ENCODE measurements at regions of chr12 and their contacts with region 1.

Region 1: DNA sequence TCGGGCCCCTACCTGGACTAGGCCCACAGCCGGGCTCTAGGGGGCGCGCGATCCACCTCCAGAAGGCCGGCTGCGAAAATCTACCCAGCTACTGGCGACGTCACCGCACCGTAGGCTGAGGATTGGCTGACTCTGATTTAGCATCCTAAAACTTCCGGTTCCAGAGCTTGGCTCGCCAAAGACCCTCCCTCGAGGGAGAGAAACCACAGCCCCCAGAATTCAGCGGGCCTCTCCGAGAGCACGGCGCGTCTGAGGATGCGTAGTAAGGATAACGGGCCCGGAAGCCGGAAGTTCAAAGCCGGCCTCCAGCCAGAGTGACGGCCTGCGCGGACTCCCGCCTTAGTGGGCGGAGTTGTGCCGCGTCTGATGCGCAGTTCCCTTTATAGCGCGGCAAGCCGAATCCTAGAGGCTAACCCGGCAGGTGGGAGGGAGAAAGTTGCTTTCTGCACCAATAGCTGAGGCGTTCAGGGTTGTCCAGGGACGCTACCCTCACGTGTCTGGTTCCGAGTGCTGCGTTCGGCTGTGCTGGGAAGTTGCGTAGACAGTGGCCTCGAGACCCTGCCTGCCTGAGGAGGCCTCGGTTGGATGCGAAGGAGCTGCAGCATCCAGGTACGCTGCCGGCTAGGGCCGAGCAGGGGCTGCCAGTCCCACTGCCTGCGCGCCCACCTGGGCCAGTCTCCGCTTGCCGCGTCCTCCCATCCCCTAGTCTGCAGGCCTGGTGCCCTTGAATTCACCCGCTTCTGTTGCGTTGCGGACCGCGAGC is at the start of gene COX14:
- DNase-seq: peak; percentile 99
- H3K4me3 Mint-ChIP-seq: peak within 1 kb of the TSS; percentile 89
- H3K27ac Mint-ChIP-seq: peak within 1 kb of the TSS; percentile 97
- H3K4me1 Mint-ChIP-seq: peaks cover 34% of the 10 kb centered on the region
- H3K27me3 Mint-ChIP-seq: no peaks in the 10 kb centered on the region
- total RNA-seq, gene COX14: 31.6 to 47.9 TPM

Region 2: DNA sequence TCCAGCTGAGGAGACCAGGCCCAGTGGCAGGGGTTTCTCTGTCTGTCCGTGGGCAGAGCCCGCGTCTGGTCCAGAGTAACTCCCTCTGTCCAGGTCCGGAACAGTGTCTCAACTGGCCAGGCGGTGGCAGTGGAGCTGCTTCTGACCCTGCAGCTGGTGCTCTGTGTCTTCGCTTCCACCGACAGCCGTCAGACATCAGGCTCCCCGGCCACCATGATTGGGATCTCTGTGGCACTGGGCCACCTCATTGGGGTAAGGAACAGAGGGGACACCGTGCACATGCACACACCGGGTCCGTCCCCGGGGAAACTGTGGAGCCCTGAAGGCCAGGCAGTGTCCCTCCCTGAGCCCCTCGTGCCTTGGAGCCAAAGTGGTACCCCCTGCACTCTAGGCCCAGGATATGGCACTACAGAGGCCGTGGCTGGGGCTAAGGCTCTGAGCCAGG is 137.6 kb before region 1 on chr12:
- CTCF ChIA-PET with region 1: no interaction called
- POLR2A ChIA-PET with region 1: no interaction called
- DNase-seq: no peak
- H3K4me3 Mint-ChIP-seq: no peak overlapping the region
- H3K27ac Mint-ChIP-seq: no peak overlapping the region
- H3K4me1 Mint-ChIP-seq: no peaks in the 10 kb centered on the region
- H3K27me3 Mint-ChIP-seq: no peaks in the 10 kb centered on the region

Region 3: GRCh38 chr12:50055831-50056638 is 55.8 kb before region 1 on chr12:
- CTCF ChIA-PET with region 1: interaction called, 11 read pairs
- POLR2A ChIA-PET with region 1: no interaction called
- DNase-seq: peak; percentile 63
- H3K4me3 Mint-ChIP-seq: peak overlapping the region; percentile 28
- H3K27ac Mint-ChIP-seq: no peak overlapping the region
- H3K4me1 Mint-ChIP-seq: peaks cover 44% of the 10 kb centered on the region
- H3K27me3 Mint-ChIP-seq: peaks cover 44% of the 10 kb centered on the region

Region 4: DNA sequence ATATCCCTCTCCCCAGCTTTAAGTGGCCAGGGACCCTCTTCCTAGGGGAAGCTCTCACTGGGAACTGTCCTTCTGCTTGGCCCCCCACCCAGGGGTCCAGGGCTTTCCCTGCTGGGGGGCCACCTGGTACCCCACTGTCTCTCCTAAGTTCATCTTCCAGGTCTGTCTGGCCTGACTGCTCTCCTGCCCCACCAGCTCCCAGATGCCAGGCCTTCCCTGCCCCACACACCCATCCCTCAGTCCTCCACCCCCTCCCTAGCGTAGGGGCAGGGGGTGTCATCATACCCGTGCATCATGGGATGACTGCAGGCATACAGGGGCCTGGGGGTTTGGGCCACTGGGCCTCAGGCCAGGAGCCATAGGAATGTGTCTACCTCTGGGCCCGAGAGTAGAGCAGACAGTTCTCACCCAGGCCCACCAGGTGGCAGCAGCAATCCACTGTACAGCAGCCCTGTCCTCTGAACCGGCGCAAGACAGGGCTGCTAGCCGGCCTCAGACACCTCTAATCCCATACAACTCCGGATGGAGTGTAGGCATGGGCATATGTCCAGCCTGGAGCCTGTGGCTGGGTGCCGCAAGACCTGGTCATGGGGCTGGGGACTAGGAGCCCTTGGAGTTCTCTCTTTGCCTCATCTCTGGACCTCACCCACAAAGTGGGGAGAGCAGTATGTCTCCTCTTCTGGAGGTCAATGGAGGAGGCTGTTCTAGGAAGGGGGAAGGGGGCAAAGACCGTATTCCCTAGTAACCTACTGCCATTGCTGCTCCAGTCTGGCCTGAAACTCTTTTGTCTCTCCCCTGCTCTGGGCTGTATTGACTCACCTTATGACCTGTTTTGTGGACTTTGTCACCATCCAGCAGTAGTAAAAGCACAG is 36.7 kb before region 1 on chr12:
- CTCF ChIA-PET with region 1: interaction called, 11 read pairs
- POLR2A ChIA-PET with region 1: no interaction called
- DNase-seq: peak; percentile 83
- H3K4me3 Mint-ChIP-seq: no peak overlapping the region
- H3K27ac Mint-ChIP-seq: peak overlapping the region; percentile 52
- H3K4me1 Mint-ChIP-seq: peaks cover 7% of the 10 kb centered on the region
- H3K27me3 Mint-ChIP-seq: no peaks in the 10 kb centered on the region

Region 5: DNA sequence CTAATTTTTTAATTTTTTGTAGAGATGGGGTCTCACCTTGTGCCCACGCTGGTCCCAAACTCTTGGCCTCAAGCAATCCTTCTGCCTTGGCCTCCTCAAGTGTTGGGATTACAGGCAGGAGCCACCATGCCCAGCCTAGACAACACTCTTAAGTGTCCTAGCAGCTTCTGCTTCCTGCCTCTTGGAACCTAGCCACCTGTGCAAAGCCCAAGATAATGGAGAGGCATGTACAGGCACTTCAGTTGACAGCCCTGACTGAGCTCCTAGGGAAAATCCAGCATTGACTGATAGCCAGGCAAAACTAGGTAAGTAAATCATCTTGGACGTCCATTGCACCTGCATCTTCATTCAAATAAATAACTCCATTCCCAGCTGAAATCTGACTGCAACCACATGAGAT is 15.7 kb after region 1 on chr12:
- CTCF ChIA-PET with region 1: interaction called, 63 read pairs
- POLR2A ChIA-PET with region 1: interaction called, 9 read pairs
- DNase-seq: no peak
- H3K4me3 Mint-ChIP-seq: no peak overlapping the region
- H3K27ac Mint-ChIP-seq: peak overlapping the region; percentile 4
- H3K4me1 Mint-ChIP-seq: peaks cover 12% of the 10 kb centered on the region
- H3K27me3 Mint-ChIP-seq: no peaks in the 10 kb centered on the region

Region 6: DNA sequence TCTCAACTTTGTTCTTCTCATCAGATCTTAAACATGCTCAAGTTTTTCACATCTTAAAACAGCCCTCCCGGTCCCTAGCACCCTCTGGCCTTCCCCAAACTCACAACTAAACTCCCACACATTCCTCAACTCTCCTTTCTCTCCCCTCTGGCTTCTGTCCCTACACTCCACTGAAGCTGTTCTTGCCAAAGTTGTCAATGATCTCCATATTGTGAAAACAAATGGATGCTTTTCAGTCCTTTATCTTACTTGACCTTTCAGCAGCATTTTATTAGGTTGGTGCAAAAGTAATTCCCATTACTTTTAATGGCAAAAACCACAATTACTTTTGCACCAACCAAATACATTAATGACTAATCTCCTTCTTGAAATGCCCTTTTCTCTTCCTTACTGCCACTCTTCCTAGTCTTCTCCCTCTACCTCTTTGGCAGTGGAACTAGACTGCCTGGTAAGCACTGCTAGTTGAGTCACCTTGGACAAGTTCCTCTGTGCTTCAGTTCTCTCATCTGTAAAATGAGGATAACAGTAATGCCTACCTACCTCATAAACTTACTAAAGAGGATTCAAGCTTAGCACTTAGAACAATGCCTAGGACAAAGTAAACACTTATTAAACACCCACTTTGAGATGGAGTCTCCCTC is 39.3 kb after region 1 on chr12:
- CTCF ChIA-PET with region 1: interaction called, 14 read pairs
- POLR2A ChIA-PET with region 1: no interaction called
- DNase-seq: no peak
- H3K4me3 Mint-ChIP-seq: no peak overlapping the region
- H3K27ac Mint-ChIP-seq: no peak overlapping the region
- H3K4me1 Mint-ChIP-seq: peaks cover 7% of the 10 kb centered on the region
- H3K27me3 Mint-ChIP-seq: no peaks in the 10 kb centered on the region

Region 7: DNA sequence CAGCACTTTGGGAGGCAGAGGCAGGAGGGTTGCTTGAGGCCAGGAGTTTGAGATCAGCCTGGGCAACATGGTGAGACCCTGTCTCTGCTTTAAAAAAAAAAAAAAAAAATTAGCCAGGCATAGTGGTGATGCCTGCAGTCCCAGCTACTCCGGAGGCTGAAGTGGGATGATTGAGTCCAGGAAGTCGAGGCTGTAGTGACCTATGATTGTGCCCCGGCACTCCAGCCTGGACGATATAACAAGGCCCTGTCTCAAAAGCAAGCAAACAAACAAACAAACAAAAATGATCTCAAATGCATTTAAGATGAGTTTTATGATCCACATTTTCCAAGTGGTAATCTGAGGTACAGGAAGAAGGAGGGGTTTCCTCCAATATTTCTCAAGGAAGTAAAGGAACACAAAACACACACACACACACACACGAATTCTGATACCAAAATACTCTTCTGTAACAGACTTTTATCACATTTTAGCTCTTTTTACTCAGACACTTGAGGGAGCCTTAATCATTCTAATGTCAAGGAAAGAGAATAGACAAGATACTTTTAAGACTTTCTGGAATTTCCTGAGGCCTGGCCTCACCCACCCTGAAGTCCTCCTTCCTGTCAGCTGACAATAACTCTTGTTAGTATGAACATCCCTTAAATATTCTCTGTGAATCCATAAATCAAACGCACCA is 99.7 kb after region 1 on chr12:
- CTCF ChIA-PET with region 1: interaction called, 10 read pairs
- POLR2A ChIA-PET with region 1: no interaction called
- DNase-seq: no peak
- H3K4me3 Mint-ChIP-seq: peak overlapping the region; percentile 37
- H3K27ac Mint-ChIP-seq: peak overlapping the region; percentile 88
- H3K4me1 Mint-ChIP-seq: peaks cover 33% of the 10 kb centered on the region
- H3K27me3 Mint-ChIP-seq: no peaks in the 10 kb centered on the region

Measured in activated CD4-positive, alpha-beta T cell treated with anti-CD3 and anti-CD28 coated beads, Interleukin-2, amount 10 ng/mL, durations not matched to agents 7 days and 5 days (primary cell).